Calu3 (cell line): ENCODE measurements at regions of chr1 and their contacts with region 1.

Region 1: DNA sequence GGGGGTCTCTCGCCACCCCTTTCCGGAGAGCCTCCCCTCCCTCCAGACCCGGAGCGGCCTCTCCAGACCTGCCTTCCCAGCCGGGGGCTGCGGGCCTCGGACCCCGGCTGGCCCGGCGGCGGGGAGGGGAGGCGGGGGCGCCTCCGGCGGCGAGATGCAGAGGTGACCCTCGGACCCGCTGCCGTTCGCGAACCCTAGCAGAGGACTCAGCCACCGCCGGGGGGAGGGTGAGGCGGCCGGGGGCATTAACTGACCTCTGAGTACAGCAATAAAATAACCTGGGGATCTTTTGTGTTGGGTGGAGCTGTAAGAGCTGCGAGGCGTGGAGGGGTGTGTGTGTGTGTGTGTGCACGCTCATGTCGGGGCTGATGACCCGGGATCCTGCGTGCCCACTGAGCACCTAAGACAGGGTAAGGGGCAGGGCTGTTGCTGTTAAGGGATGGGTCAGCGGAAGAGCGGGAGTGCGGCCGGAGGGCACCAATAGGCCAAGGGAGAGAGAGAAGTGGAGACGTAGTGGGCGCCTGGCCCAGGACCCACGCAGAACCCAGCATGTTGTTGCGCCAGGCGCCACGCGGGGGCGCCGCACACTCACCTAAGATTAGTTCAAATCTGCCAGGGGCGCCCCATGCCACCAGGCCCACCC is 6.3 kb downstream of the HAPLN2 start:
- DNase-seq: peak; percentile 72
- H3K4me3 Mint-ChIP-seq: peak overlapping the region; percentile 45
- H3K27ac Mint-ChIP-seq: no peak overlapping the region
- H3K4me1 Mint-ChIP-seq: peaks cover 12% of the 10 kb centered on the region
- H3K27me3 Mint-ChIP-seq: peaks cover 60% of the 10 kb centered on the region
- CTCF ChIP-seq: peak; percentile 87

Region 2: GRCh38 chr1:156659994-156660751 is 34.6 kb after region 1 on chr1:
- CTCF ChIA-PET with region 1: interaction called, 8 read pairs
- intact Hi-C with region 1: loop called (anchors 1 kb)
- DNase-seq: peak; percentile 99
- H3K4me3 Mint-ChIP-seq: peak overlapping the region; percentile 87
- H3K27ac Mint-ChIP-seq: peak overlapping the region; percentile 88
- H3K4me1 Mint-ChIP-seq: peaks cover 77% of the 10 kb centered on the region
- H3K27me3 Mint-ChIP-seq: no peaks in the 10 kb centered on the region
- CTCF ChIP-seq: peak; percentile 98

Region 3: GRCh38 chr1:156677616-156678596 is 52.3 kb after region 1 on chr1:
- CTCF ChIA-PET with region 1: interaction called, 17 read pairs
- intact Hi-C with region 1: loop called (anchors 1 kb)
- DNase-seq: peak; percentile 70
- H3K4me3 Mint-ChIP-seq: peak overlapping the region; percentile 64
- H3K27ac Mint-ChIP-seq: peak overlapping the region; percentile 5
- H3K4me1 Mint-ChIP-seq: peaks cover 14% of the 10 kb centered on the region
- H3K27me3 Mint-ChIP-seq: peaks cover 71% of the 10 kb centered on the region
- CTCF ChIP-seq: peak; percentile 88

Region 4: DNA sequence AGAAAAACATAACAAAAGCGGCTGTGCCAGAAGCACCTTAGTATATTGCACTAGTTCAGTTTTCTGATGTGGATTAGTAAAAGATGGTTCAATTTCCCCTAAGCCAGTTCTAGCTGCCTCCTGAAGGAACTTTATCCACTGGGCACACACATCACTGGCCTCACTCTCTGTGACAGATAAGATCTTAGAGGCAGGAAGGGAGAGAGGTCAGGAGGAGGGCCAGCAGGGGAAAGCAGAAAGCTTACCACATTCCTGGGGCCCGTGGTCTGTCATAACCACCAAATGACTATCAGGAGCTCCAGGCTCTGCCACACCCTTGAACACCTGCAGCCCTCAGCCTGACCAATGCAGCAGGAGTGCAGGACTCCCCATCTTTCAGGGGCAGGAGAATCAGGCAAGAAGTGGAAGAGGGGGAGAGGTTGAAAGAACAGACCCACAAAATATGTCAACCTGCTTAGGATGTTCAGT is 332.7 kb after region 1 on chr1:
- CTCF ChIA-PET with region 1: interaction called, 11 read pairs
- intact Hi-C with region 1: no loop called
- DNase-seq: no peak
- H3K4me3 Mint-ChIP-seq: no peak overlapping the region
- H3K27ac Mint-ChIP-seq: no peak overlapping the region
- H3K4me1 Mint-ChIP-seq: peaks cover 11% of the 10 kb centered on the region
- H3K27me3 Mint-ChIP-seq: no peaks in the 10 kb centered on the region
- CTCF ChIP-seq: no peak